Gastrocnemius medialis (tissue), 4 donors: ENCODE measurements at regions of chr3 and their contacts with region 1.

Region 1: DNA sequence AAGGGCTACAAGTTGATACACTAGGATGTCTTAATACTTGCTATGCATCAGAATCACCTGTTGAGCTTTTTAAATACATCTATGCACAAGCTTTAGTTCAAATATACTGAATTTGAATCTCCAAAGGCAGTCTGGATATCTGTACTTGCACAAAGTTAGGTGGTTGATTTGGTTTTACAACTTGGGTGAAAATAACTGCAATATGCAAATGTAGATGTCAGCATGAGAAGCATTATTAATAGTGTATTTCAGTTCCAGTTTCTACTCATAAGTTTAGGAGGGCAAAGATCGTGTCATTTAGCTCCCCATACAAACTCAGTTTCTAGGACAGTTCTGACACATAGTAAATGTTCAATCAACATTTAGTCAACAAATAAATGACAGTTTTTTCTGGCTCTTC is 25.6 kb downstream of the IQCB1 start:
- DNase-seq: no peak
- ATAC-seq: no peak
- H3K4me3 ChIP-seq: no peak overlapping the region
- H3K27ac ChIP-seq: no peak overlapping the region
- H3K4me1 ChIP-seq: no peaks in the 10 kb centered on the region
- H3K27me3 ChIP-seq: no peaks in the 10 kb centered on the region
- CTCF ChIP-seq: no peak
- POLR2A ChIP-seq: no peak

Region 2: DNA sequence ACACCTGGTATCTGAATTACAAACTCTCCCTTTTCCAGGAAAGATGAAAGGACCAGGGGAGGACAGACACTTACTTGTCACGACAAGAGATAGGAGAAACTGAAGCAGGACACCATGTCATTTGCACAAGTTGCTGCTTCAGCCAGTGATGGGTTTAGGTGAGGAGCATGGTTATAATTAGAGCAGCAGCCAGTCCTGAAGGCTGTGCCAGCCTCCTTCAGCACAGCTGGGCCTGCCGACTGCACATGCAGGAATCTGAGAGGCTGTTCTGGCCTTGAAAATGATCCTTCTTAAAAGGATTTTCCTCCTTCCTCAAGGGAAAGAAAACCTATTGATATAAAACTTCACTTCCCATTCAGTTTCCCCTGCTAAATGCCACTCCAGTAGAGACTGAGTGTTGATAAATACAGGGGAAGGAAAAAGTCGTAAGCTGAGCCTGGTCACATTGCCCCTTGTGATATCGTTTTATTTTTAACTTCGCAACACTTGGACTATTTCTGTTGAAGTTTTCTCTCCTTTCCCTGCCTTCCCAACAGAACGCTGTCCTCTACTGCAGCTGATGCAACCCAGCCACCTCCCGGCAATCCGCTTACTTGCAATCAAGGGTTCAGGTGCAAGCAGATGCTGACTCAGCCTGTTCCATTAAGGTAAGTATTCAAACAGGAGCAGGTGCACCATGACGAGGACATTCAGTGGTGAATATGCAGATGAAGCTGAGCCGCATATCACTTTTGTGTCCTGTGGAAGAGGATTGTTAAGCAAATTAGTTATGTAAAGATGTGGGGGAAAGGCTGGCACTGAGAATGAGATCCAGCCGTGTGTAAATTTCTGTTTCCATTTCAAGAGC is 216.2 kb before region 1 on chr3 and contains the start of gene FBXO40:
- in situ Hi-C with region 1: no loop called
- intact Hi-C with region 1: no loop called
- DNase-seq: peak; percentile 79 to 91
- ATAC-seq: peak; percentile 88 to 90
- H3K4me3 ChIP-seq: peak within 1 kb of the TSS; percentile 47 to 53 (median 52)
- H3K27ac ChIP-seq: peak within 1 kb of the TSS; percentile 87 to 95 (median 94)
- H3K4me1 ChIP-seq: peaks cover 39 to 40% of the 10 kb centered on the region in 2 donors
- H3K27me3 ChIP-seq: no peaks in the 10 kb centered on the region
- CTCF ChIP-seq: no peak
- POLR2A ChIP-seq: peak; percentile 27 to 72
- total RNA-seq, gene FBXO40: 7.2 to 40.8 (median 28.7) TPM

Region 3: GRCh38 chr3:121724130-121724529 is 85.1 kb before region 1 on chr3:
- in situ Hi-C with region 1: loop called in 1 of 4 experiments (anchors 25 kb)
- intact Hi-C with region 1: no loop called
- DNase-seq: no peak
- ATAC-seq: no peak
- H3K4me3 ChIP-seq: no peak overlapping the region
- H3K27ac ChIP-seq: no peak overlapping the region
- H3K4me1 ChIP-seq: no peaks in the 10 kb centered on the region
- H3K27me3 ChIP-seq: no peaks in the 10 kb centered on the region
- CTCF ChIP-seq: no peak
- POLR2A ChIP-seq: no peak